ENCODE measurements at regions of chr6 and their contacts with region 1.

Region 1: GRCh38 chr6:99520855-99521632 is 5.8 kb upstream of the USP45 start:
- DNase-seq: peak; percentile 84
- H3K4me3 Mint-ChIP-seq: peak overlapping the region; percentile 97
- H3K27ac Mint-ChIP-seq: peak overlapping the region; percentile 92
- H3K4me1 Mint-ChIP-seq: peaks cover 15% of the 10 kb centered on the region
- H3K27me3 Mint-ChIP-seq: peaks cover 1% of the 10 kb centered on the region

Region 2: DNA sequence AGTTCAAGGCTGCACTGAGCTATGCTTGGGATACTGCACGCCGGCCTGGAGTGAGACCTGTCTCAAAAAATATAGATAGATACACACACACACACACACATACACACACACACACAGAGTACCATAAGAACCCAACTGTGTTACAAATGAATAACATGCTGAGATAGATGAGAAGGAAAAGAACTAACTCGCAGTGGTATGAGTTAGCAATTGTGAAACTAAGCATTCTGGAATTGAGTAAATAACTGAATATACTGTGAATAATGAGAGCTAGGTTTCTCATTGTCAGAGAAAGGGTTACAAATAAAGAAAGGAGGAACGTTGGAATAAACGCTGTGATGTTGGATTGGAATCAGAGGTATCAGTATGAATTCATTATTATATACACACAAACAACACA is 157.0 kb before region 1 on chr6:
- CTCF ChIA-PET with region 1: no interaction called
- POLR2A ChIA-PET with region 1: no interaction called
- intact Hi-C with region 1: loop called (anchors 5 kb)
- DNase-seq: peak; percentile 11
- H3K4me3 Mint-ChIP-seq: no peak overlapping the region
- H3K27ac Mint-ChIP-seq: no peak overlapping the region
- H3K4me1 Mint-ChIP-seq: peaks cover 16% of the 10 kb centered on the region
- H3K27me3 Mint-ChIP-seq: peaks cover 21% of the 10 kb centered on the region

Region 3: GRCh38 chr6:99467509-99468106 is 53.4 kb before region 1 on chr6:
- CTCF ChIA-PET with region 1: interaction called, 6 read pairs
- POLR2A ChIA-PET with region 1: no interaction called
- intact Hi-C with region 1: loop called (anchors 5 kb)
- DNase-seq: no peak
- H3K4me3 Mint-ChIP-seq: no peak overlapping the region
- H3K27ac Mint-ChIP-seq: no peak overlapping the region
- H3K4me1 Mint-ChIP-seq: no peaks in the 10 kb centered on the region
- H3K27me3 Mint-ChIP-seq: no peaks in the 10 kb centered on the region

Region 4: DNA sequence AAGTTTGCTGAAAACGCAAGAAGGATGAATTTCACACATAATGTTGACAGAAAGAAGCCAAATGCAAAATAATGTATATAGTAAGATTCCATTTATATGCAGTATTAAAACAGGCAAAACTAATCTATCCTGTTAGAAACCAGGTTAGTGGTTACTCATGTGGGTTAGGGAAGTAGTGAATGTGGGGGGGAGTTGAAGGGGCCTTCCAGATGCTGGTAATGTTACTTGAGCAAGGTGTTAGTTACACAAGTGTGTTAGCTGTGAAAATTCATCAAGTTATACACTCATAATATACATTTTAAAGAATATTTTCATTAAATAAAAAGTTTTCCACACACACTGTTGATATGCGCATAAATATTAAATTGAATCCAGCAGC is 35.7 kb before region 1 on chr6:
- CTCF ChIA-PET with region 1: no interaction called
- POLR2A ChIA-PET with region 1: no interaction called
- intact Hi-C with region 1: no loop called
- DNase-seq: no peak
- H3K4me3 Mint-ChIP-seq: no peak overlapping the region
- H3K27ac Mint-ChIP-seq: no peak overlapping the region
- H3K4me1 Mint-ChIP-seq: peaks cover under 1% of the 10 kb centered on the region
- H3K27me3 Mint-ChIP-seq: no peaks in the 10 kb centered on the region

Region 5: DNA sequence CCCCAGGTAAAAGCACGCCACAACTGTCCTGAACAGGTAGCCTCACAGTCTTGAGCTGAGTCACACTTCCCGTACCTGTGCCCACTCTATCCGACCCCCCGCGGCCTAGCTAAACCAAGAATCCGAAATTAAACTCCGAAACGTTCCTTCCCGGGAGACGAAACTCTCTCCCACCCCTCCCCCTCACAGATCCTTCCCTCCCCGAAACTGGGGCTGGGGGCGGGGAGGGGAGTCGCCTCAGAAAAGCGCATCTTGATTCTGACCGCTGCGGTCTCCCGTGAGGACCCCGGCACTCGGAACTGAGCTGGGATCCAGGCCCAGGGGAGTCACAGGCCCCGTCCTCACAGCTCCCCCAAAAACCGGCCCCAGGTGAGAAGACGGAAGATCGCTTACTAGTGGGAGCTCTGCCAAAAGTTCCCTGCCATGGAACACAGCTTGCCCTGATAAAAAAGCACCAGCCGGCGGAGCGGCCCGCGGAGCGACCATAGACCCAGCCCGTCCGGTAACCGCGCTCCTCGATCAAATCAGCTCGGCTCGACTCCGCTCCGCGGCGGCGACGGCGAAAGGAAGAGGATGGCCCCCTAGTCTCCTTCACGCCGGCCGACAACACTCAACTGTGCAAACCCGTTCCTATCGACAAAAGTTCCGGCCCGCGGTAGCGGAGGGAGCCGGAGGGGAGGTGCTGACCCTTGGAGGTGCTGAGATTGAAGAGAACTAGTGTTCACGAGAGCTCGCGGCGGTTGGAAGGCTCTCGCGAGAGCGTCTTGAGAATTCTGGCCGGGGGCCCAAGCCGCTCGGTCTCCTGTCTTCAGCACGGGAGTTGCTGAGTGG is 47.3 kb after region 1 on chr6 and contains the start of gene CCNC:
- CTCF ChIA-PET with region 1: interaction called, 6 read pairs
- POLR2A ChIA-PET with region 1: interaction called, 10 read pairs
- intact Hi-C with region 1: loop called (anchors 1 kb)
- DNase-seq: peak; percentile 94
- H3K4me3 Mint-ChIP-seq: peak within 1 kb of the TSS; percentile 97
- H3K27ac Mint-ChIP-seq: peak within 1 kb of the TSS; percentile 94
- H3K4me1 Mint-ChIP-seq: peaks cover 25% of the 10 kb centered on the region
- H3K27me3 Mint-ChIP-seq: no peaks in the 10 kb centered on the region
- total RNA-seq, gene CCNC: 59.9 to 64.0 TPM

Region 6: DNA sequence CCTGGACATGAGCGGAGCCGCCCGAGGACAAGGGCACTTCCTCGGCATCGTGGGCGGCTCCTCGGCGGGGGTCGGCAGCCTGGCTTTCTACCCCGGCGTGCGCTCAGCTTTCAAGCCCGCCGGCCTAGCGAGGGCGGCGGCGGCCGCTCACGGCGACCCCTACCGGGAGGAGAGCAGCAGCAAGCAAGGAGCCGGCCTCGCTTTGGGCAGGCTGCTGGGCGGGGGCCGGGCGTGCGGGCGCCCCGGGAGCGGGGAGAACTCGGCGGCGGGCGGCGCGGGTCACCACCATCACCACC is 92.3 kb after region 1 on chr6:
- CTCF ChIA-PET with region 1: no interaction called
- POLR2A ChIA-PET with region 1: no interaction called
- intact Hi-C with region 1: loop called (anchors 2 kb)
- DNase-seq: peak; percentile 59
- H3K4me3 Mint-ChIP-seq: no peak overlapping the region
- H3K27ac Mint-ChIP-seq: no peak overlapping the region
- H3K4me1 Mint-ChIP-seq: peaks cover 25% of the 10 kb centered on the region
- H3K27me3 Mint-ChIP-seq: peaks cover 78% of the 10 kb centered on the region

Region 7: GRCh38 chr6:99746261-99746895 is 225.3 kb after region 1 on chr6:
- CTCF ChIA-PET with region 1: interaction called, 3 read pairs
- POLR2A ChIA-PET with region 1: no interaction called
- intact Hi-C with region 1: loop called (anchors 5 kb)
- DNase-seq: peak; percentile 56
- H3K4me3 Mint-ChIP-seq: no peak overlapping the region
- H3K27ac Mint-ChIP-seq: no peak overlapping the region
- H3K4me1 Mint-ChIP-seq: no peaks in the 10 kb centered on the region
- H3K27me3 Mint-ChIP-seq: peaks cover 16% of the 10 kb centered on the region